ENCODE measurements at regions of chr12 and their contacts with region 1.

Region 1: DNA sequence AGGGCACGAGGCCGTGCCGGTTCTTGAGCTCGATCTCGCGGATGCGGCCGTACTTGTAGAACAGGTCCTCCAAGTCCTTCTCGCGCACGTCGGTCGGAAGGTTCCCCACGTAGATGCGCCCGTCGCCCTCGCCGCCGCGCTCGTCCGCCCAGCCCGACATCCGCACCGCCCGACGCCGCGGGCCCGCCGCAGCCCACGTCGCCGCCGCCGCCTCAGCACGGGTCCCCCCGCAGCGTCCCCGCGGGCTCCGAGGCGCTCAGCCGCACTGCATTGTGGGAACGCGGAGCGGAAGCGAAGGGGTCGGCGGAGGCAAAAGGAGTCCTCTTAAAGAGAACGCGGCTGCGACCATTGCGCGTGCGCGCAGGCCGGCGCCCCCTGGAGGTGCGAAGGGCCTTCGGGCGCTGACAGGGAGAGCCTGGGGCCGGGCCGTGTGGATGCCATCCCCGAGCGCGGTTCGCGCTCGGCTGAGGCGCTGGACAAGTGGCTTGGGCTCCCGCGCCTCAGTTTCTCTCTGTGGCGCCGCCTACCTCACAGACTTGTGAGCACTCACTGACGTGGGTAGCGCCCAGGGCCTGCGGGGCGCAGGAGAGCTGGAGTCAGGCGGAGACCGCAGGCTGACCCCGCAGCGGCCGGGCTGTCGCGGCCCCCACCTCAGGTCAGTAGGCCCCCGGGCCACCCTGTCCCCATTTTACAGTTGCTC is at the start of gene SRSF9:
- DNase-seq: peak; percentile 95 to 97
- H3K4me3 ChIP-seq: peak within 1 kb of the TSS; percentile 80
- H3K4me3 Mint-ChIP-seq: peak within 1 kb of the TSS; percentile 85
- H3K27ac Mint-ChIP-seq: peak within 1 kb of the TSS; percentile 79
- H3K4me1 ChIP-seq: peaks cover 5% of the 10 kb centered on the region
- H3K4me1 Mint-ChIP-seq: peaks cover 8% of the 10 kb centered on the region
- H3K27me3 ChIP-seq: no peaks in the 10 kb centered on the region
- H3K27me3 Mint-ChIP-seq: no peaks in the 10 kb centered on the region
- CTCF ChIP-seq: peak; percentile 84 to 93
- total RNA-seq, gene SRSF9: 240 and 244 TPM in 2 replicates

Region 2: GRCh38 chr12:120142231-120142877 is 327.2 kb before region 1 on chr12:
- CTCF ChIA-PET with region 1: no interaction called
- POLR2A ChIA-PET with region 1: no interaction called
- intact Hi-C with region 1: no loop called
- DNase-seq: no peak
- H3K4me3 ChIP-seq: no peak overlapping the region
- H3K4me3 Mint-ChIP-seq: no peak overlapping the region
- H3K27ac Mint-ChIP-seq: no peak overlapping the region
- H3K4me1 ChIP-seq: no peaks in the 10 kb centered on the region
- H3K4me1 Mint-ChIP-seq: no peaks in the 10 kb centered on the region
- H3K27me3 ChIP-seq: no peaks in the 10 kb centered on the region
- H3K27me3 Mint-ChIP-seq: no peaks in the 10 kb centered on the region
- CTCF ChIP-seq: no peak

Region 3: DNA sequence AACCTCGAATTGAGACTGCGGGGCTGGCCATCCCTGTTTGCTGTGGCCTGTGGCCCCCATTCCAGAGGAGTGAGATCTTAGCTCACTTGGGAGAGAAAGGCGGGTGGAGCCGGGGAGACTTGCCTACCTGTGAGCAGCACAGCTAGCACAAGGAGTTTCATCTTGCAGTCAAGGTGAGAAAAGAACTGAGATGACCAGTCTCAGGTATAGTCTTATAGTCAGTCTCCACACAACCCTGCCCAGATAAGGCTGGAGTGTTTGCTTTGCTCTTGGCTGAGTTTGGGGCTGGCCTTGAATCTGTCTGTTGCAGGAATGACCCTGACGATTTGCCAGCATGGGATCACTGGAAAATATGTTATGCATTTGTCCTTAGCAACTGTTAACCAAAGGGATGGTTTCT is 142.0 kb before region 1 on chr12 and contains the start of gene PLA2G1B:
- CTCF ChIA-PET with region 1: no interaction called
- POLR2A ChIA-PET with region 1: no interaction called
- intact Hi-C with region 1: loop called (anchors 2 kb)
- DNase-seq: no peak
- H3K4me3 ChIP-seq: no peak within 1 kb of the TSS
- H3K4me3 Mint-ChIP-seq: no peak within 1 kb of the TSS
- H3K27ac Mint-ChIP-seq: no peak within 1 kb of the TSS
- H3K4me1 ChIP-seq: no peaks in the 10 kb centered on the region
- H3K4me1 Mint-ChIP-seq: peaks cover 7% of the 10 kb centered on the region
- H3K27me3 ChIP-seq: no peaks in the 10 kb centered on the region
- H3K27me3 Mint-ChIP-seq: no peaks in the 10 kb centered on the region
- CTCF ChIP-seq: no peak
- total RNA-seq, gene PLA2G1B: not detected in 2 replicates

Region 4: DNA sequence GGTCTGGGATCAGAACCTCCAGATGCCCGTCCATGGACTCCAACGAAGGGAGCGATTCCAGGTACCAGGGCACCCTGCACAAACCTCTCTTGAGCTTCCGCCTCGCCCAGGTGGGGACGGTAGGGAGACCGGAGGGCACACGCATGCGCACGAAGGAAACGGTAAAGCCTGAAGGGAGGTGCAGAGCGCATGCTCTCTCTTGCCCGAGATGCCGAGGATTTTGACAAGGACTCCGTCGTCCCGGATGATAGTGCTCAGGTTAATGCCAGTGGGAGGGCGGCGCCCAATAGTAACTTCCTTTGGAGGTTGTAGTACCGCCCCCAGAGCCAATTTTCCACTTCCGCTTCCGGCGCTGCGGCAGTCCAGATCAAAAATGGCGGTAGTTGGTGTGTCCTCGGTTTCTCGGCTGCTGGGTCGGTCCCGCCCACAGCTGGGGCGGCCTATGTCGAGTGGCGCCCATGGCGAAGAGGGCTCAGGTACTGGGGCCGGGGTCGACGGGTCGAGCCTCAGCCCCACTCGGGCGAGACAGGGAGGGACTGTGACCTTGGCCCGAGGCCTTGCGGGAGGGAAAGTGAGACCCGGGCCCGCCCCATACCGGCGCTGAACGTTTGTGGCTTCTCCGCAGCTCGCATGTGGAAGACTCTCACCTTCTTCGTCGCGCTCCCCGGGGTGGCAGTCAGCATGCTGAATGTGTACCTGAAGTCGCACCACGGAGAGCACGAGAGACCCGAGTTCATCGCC is 31.7 kb before region 1 on chr12 and contains the start of gene COX6A1:
- CTCF ChIA-PET with region 1: no interaction called
- POLR2A ChIA-PET with region 1: no interaction called
- intact Hi-C with region 1: loop called (anchors 1 kb)
- DNase-seq: peak; percentile 97 to 99
- H3K4me3 ChIP-seq: peak within 1 kb of the TSS; percentile 46
- H3K4me3 Mint-ChIP-seq: peak within 1 kb of the TSS; percentile 90
- H3K27ac Mint-ChIP-seq: peak within 1 kb of the TSS; percentile 70
- H3K4me1 ChIP-seq: no peaks in the 10 kb centered on the region
- H3K4me1 Mint-ChIP-seq: no peaks in the 10 kb centered on the region
- H3K27me3 ChIP-seq: no peaks in the 10 kb centered on the region
- H3K27me3 Mint-ChIP-seq: no peaks in the 10 kb centered on the region
- CTCF ChIP-seq: no peak
- total RNA-seq, gene COX6A1: 474 and 492 TPM in 2 replicates

Region 5: GRCh38 chr12:120457133-120457532 is 12.5 kb before region 1 on chr12:
- CTCF ChIA-PET with region 1: interaction called, 6 read pairs
- POLR2A ChIA-PET with region 1: interaction called, 12 read pairs
- intact Hi-C with region 1: no loop called
- DNase-seq: peak in 1 of 2 experiments; percentile 47
- H3K4me3 ChIP-seq: no peak overlapping the region
- H3K4me3 Mint-ChIP-seq: no peak overlapping the region
- H3K27ac Mint-ChIP-seq: peak overlapping the region; percentile 29
- H3K4me1 ChIP-seq: peaks cover 15% of the 10 kb centered on the region
- H3K4me1 Mint-ChIP-seq: no peaks in the 10 kb centered on the region
- H3K27me3 ChIP-seq: no peaks in the 10 kb centered on the region
- H3K27me3 Mint-ChIP-seq: no peaks in the 10 kb centered on the region
- CTCF ChIP-seq: peak; percentile 47 to 48

Region 6: GRCh38 chr12:120528861-120529525 is 59.4 kb after region 1 on chr12 and contains the start of gene COQ5:
- CTCF ChIA-PET with region 1: interaction called, 3 read pairs
- POLR2A ChIA-PET with region 1: interaction called, 3 read pairs
- intact Hi-C with region 1: loop called (anchors 5 kb)
- DNase-seq: peak; percentile 84 to 87
- H3K4me3 ChIP-seq: peak within 1 kb of the TSS; percentile 89
- H3K4me3 Mint-ChIP-seq: peak within 1 kb of the TSS; percentile 81
- H3K27ac Mint-ChIP-seq: peak within 1 kb of the TSS; percentile 93
- H3K4me1 ChIP-seq: peaks cover 5% of the 10 kb centered on the region; the same call in 1 of the 2 replicates
- H3K4me1 Mint-ChIP-seq: peaks cover 6% of the 10 kb centered on the region
- H3K27me3 ChIP-seq: no peaks in the 10 kb centered on the region
- H3K27me3 Mint-ChIP-seq: no peaks in the 10 kb centered on the region
- CTCF ChIP-seq: no peak
- total RNA-seq, gene COQ5: 20.7 and 20.9 TPM in 2 replicates